ENCODE measurements at regions of chr20 and their contacts with region 1.

Region 1: DNA sequence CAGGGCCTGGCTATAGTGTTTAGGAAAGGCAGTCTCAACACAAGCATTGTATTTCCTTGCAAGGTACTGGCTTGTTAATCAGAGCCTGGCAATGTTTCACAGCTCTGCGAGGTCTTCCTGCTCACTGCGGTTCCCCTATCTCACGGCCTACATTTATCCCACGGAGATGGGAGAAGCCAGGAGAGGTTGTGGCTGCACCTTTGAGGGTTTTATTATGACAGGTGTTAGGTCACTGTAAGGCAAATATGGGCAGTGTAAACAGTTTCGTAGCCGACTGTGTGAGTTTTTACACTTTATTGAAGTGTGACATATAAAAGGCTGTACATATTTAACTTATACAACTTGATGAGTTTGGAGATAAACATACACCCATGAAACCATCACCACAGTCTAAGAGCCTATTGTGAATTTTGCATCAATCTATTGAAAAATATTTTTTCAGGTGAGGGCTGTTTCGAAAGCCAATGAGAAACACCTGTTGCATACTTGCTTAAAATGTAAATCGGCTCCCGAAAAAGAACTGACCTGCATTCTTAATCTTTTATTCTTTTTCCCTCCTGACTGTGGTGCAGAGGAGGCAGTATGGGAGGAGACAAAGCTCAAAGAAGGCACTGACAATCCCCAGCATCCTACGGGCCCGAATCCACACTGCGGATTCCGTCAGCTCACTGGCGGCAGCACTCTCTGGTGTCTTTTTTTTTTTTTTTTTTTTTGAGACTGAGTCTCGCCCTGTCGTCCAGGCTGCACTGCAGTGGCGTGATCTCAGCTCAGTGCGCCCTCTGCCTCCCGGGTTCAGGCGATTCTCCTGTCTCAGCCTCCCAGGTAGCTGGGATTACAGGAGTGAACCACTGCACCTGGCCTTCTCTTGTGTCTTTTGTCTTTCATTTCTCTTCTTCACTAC is 7.5 kb upstream of the RBM38 start:
- DNase-seq: no peak
- H3K4me3 ChIP-seq: no peak overlapping the region
- H3K27me3 ChIP-seq: no peaks in the 10 kb centered on the region
- CTCF ChIP-seq: no peak

Region 2: DNA sequence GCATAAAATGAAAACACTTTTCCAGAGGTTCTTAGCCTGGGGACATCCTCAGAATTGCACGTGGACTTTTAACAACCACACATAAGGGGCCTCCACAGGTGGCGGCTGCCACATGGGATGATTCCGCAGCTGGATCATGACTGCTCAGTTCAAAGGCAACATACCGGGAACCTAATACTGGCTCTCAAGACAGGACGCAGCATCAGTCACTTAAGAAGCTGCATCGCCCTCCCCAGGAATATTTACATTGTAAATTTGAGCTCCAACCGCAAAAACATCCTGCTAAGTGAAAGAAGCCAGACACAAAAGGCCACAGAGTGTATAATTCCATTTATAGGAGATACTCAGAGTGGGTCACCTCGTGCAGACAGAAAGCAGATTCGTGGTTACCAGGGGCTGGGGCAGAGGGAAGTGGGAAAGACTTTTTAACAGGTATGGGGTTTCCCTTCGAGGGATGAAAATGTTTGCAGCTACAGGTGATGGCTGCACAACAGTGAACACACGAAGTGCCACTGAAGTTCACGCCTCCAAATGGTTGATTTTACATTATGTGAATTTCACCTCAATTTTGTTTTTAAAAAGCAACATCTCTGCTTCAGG is 258.8 kb before region 1 on chr20:
- CTCF ChIA-PET with region 1: no interaction called
- POLR2A ChIA-PET with region 1: no interaction called
- DNase-seq: no peak
- H3K4me3 ChIP-seq: no peak overlapping the region
- H3K27me3 ChIP-seq: peaks cover 1% of the 10 kb centered on the region; the same call in 1 of the 2 replicates
- CTCF ChIP-seq: no peak

Region 3: GRCh38 chr20:57361212-57361915 is 22.3 kb before region 1 on chr20:
- CTCF ChIA-PET with region 1: interaction called, 13 read pairs
- POLR2A ChIA-PET with region 1: no interaction called
- DNase-seq: peak; percentile 63
- H3K4me3 ChIP-seq: no peak overlapping the region
- H3K27me3 ChIP-seq: no peaks in the 10 kb centered on the region
- CTCF ChIP-seq: no peak

Region 4: GRCh38 chr20:57493091-57493615 is 109.5 kb after region 1 on chr20:
- CTCF ChIA-PET with region 1: interaction called, 32 read pairs
- POLR2A ChIA-PET with region 1: no interaction called
- DNase-seq: no peak
- H3K4me3 ChIP-seq: no peak overlapping the region
- H3K27me3 ChIP-seq: no peaks in the 10 kb centered on the region; the same call in 1 of the 2 replicates
- CTCF ChIP-seq: no peak

Measured in BJ (cell line).